ENCODE measurements at regions of chr7 and their contacts with region 1.

Region 1: GRCh38 chr7:18352339-18353255 is 143.0 kb upstream of the HDAC9 start:
- DNase-seq: peak; percentile 12
- CTCF ChIP-seq: peak; percentile 65

Region 2: GRCh38 chr7:18053177-18053928 is 299.2 kb before region 1 on chr7:
- in situ Hi-C with region 1: no loop called
- DNase-seq: no peak
- CTCF ChIP-seq: no peak

Region 3: DNA sequence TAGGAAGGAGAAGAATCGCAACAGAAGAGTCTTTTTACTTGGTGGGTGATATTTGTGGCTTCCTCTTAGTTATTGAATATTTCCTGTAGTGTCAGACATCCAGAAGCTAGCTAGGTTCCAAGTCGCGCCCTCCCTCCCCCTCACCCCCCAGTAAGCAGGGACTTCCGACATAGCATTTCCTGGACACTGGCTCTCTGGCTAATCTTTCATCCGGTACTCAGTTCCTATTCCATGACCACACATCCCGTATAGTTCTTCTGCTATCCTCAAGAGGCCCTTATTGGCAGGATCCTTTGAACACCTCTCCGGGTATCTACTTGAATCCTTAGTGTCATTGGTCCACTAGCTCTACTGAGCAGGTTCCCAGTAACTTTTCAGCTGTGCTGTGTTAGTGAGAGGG is 310.7 kb after region 1 on chr7:
- in situ Hi-C with region 1: loop called (anchors 5 kb)
- DNase-seq: no peak
- CTCF ChIP-seq: no peak

Region 4: GRCh38 chr7:19051767-19052375 is 699.3 kb after region 1 on chr7:
- in situ Hi-C with region 1: loop called (anchors 10 kb)
- DNase-seq: peak; percentile 34
- CTCF ChIP-seq: peak; percentile 79

Region 5: GRCh38 chr7:19665399-19666008 is 1312.9 kb after region 1 on chr7:
- in situ Hi-C with region 1: loop called (anchors 25 kb)
- DNase-seq: peak; percentile 24
- CTCF ChIP-seq: peak; percentile 31

Measured in GM13976 (cell line).